Panc1 (cell line): ENCODE measurements at regions of chr10 and their contacts with region 1.

Region 1: DNA sequence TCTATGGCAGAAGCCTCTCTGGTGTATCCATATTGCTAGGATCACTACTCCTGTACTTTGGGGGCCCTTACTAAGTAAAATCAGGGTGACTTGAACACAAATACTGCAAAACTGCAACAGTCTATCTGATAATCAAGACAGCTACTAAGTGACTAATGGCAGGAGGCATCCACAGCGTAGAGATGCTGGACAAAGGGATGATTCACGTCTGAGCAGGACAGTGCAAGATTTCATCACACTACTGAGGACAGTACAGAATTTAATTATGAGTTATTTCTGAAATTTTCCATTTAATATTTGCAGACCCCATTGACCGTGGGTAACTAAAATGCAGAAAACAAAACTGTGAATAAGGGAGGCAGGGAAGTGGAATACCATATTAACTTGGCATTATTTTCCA is 10.4 kb downstream of the CUL2 start:
- DNase-seq: no peak
- ATAC-seq: no peak
- H3K4me3 ChIP-seq: no peak overlapping the region
- H3K27ac ChIP-seq: no peak overlapping the region
- H3K4me1 ChIP-seq: no peaks in the 10 kb centered on the region
- H3K27me3 ChIP-seq: no peaks in the 10 kb centered on the region
- CTCF ChIP-seq: no peak

Region 2: GRCh38 chr10:35017608-35018007 is 62.2 kb before region 1 on chr10:
- CTCF ChIA-PET with region 1: interaction called, 10 read pairs
- POLR2A ChIA-PET with region 1: no interaction called
- in situ Hi-C with region 1: no loop called
- intact Hi-C with region 1: no loop called
- DNase-seq: no peak
- ATAC-seq: no peak
- H3K4me3 ChIP-seq: no peak overlapping the region
- H3K27ac ChIP-seq: no peak overlapping the region
- H3K4me1 ChIP-seq: no peaks in the 10 kb centered on the region
- H3K27me3 ChIP-seq: no peaks in the 10 kb centered on the region
- CTCF ChIP-seq: no peak